Right cardiac atrium (tissue), 5 donors: ENCODE measurements at regions of chr2 and their contacts with region 1.

Region 1: GRCh38 chr2:216666461-216667233 is 28.7 kb downstream of the IGFBP5 start:
- DNase-seq: peak in 2 of 3 donors; percentile 83 to 85
- ATAC-seq: peak; percentile 34 to 59
- H3K4me3 ChIP-seq: no peak overlapping the region
- H3K27ac ChIP-seq: no peak overlapping the region
- H3K4me1 ChIP-seq: no peaks in the 10 kb centered on the region
- H3K27me3 ChIP-seq: no peaks in the 10 kb centered on the region

Region 2: DNA sequence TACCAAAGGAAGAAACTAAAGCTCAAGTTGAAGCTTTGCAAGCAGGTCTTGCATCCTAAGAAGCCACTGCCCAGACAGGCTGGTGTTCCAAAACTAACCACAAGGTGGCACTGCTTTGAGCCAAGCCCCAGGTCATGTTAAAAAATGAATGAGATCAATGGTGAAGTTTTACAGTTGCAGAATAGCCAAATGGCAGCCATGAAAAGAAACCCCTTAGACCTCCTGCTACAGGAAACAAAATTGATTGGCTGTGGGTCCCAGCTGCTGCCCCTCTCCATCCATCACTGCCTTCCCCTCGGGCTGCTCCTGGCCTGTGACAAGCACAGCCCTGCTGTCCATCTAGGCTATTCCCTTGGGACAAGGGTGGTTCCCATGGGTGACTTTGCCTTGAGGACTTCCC is 632.6 kb before region 1 on chr2:
- intact Hi-C with region 1: loop called in 1 of 4 experiments (anchors 10 kb)
- DNase-seq: peak; percentile 54 to 80 (median 69)
- ATAC-seq: peak; percentile 43 to 57
- H3K4me3 ChIP-seq: no peak overlapping the region
- H3K27ac ChIP-seq: no peak overlapping the region
- H3K4me1 ChIP-seq: no peaks in the 10 kb centered on the region
- H3K27me3 ChIP-seq: no peaks in the 10 kb centered on the region